ENCODE measurements at regions of chr2 and their contacts with region 1.

Region 1: GRCh38 chr2:135728064-135728743 is 13.5 kb upstream of the UBXN4 start:
- DNase-seq: no peak
- H3K4me3 ChIP-seq: no peak overlapping the region
- H3K27ac ChIP-seq: no peak overlapping the region
- H3K4me1 ChIP-seq: no peaks in the 10 kb centered on the region
- H3K27me3 ChIP-seq: no peaks in the 10 kb centered on the region
- CTCF ChIP-seq: no peak
- POLR2A ChIP-seq: no peak

Region 2: GRCh38 chr2:134127496-134127895 is 1600.7 kb before region 1 on chr2:
- CTCF ChIA-PET with region 1: no interaction called
- POLR2A ChIA-PET with region 1: interaction called, 10 read pairs
- dilution Hi-C with region 1: no loop called
- intact Hi-C with region 1: no loop called
- DNase-seq: no peak
- H3K4me3 ChIP-seq: no peak overlapping the region
- H3K27ac ChIP-seq: no peak overlapping the region
- H3K4me1 ChIP-seq: peaks cover 10% of the 10 kb centered on the region
- H3K27me3 ChIP-seq: no peaks in the 10 kb centered on the region
- CTCF ChIP-seq: no peak
- POLR2A ChIP-seq: no peak

Region 3: GRCh38 chr2:135657806-135658582 is 70.2 kb before region 1 on chr2:
- CTCF ChIA-PET with region 1: no interaction called
- POLR2A ChIA-PET with region 1: no interaction called
- dilution Hi-C with region 1: no loop called
- intact Hi-C with region 1: no loop called
- DNase-seq: no peak
- H3K4me3 ChIP-seq: no peak overlapping the region
- H3K27ac ChIP-seq: no peak overlapping the region
- H3K4me1 ChIP-seq: no peaks in the 10 kb centered on the region
- H3K27me3 ChIP-seq: no peaks in the 10 kb centered on the region
- CTCF ChIP-seq: no peak
- POLR2A ChIP-seq: no peak

Measured in endothelial cell of umbilical vein (primary cell).